ENCODE measurements at regions of chr4 and their contacts with region 1.

Region 1: DNA sequence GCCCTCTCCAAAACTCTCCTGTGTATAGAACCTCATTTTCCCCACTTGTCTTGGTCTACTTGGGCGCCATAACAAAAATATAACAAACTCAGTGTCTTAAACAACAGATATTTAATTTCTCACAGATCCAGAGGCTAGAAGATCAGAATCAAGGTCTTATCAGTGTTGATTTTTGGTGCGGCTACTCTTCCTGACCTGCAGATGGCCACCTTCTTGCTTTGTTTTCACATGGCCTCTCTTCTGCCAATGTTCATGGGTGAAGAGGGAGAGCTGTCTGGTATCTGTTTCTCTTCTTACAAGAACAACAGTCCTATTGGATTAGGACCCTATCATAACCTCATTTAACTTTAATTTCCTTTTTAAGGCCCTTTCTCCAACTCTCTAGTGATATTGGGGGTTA is 177.3 kb downstream of the PABPC4L start:
- DNase-seq: peak; percentile 16
- H3K4me3 ChIP-seq: no peak overlapping the region
- H3K27ac ChIP-seq: no peak overlapping the region
- H3K4me1 ChIP-seq: no peaks in the 10 kb centered on the region
- H3K27me3 ChIP-seq: no peaks in the 10 kb centered on the region
- CTCF ChIP-seq: peak in 1 of 2 donors; percentile 33
- POLR2A ChIP-seq: no peak

Region 2: GRCh38 chr4:133943081-133943480 is 81.2 kb before region 1 on chr4:
- CTCF ChIA-PET with region 1: no interaction called
- POLR2A ChIA-PET with region 1: no interaction called
- dilution Hi-C with region 1: no loop called
- intact Hi-C with region 1: no loop called
- DNase-seq: no peak
- H3K4me3 ChIP-seq: no peak overlapping the region
- H3K27ac ChIP-seq: no peak overlapping the region
- H3K4me1 ChIP-seq: no peaks in the 10 kb centered on the region
- H3K27me3 ChIP-seq: no peaks in the 10 kb centered on the region
- CTCF ChIP-seq: no peak
- POLR2A ChIP-seq: no peak

Region 3: GRCh38 chr4:134045411-134045810 is 21.2 kb after region 1 on chr4:
- CTCF ChIA-PET with region 1: no interaction called
- POLR2A ChIA-PET with region 1: no interaction called
- dilution Hi-C with region 1: no loop called
- intact Hi-C with region 1: no loop called
- DNase-seq: no peak
- H3K4me3 ChIP-seq: no peak overlapping the region
- H3K27ac ChIP-seq: no peak overlapping the region
- H3K4me1 ChIP-seq: no peaks in the 10 kb centered on the region
- H3K27me3 ChIP-seq: no peaks in the 10 kb centered on the region
- CTCF ChIP-seq: no peak
- POLR2A ChIP-seq: no peak

Region 4: GRCh38 chr4:134777606-134778005 is 753.4 kb after region 1 on chr4:
- CTCF ChIA-PET with region 1: interaction called, 19 read pairs
- POLR2A ChIA-PET with region 1: no interaction called
- dilution Hi-C with region 1: no loop called
- intact Hi-C with region 1: loop called (anchors 10 kb)
- DNase-seq: peak; percentile 64
- H3K4me3 ChIP-seq: no peak overlapping the region
- H3K27ac ChIP-seq: no peak overlapping the region
- H3K4me1 ChIP-seq: peaks cover 2% of the 10 kb centered on the region
- H3K27me3 ChIP-seq: no peaks in the 10 kb centered on the region
- CTCF ChIP-seq: peak in 1 of 2 donors; percentile 13
- POLR2A ChIP-seq: no peak

Region 5: GRCh38 chr4:134906404-134907023 is 882.3 kb after region 1 on chr4:
- CTCF ChIA-PET with region 1: interaction called, 7 read pairs
- POLR2A ChIA-PET with region 1: no interaction called
- dilution Hi-C with region 1: no loop called
- intact Hi-C with region 1: loop called (anchors 1 kb)
- DNase-seq: peak; percentile 40
- H3K4me3 ChIP-seq: no peak overlapping the region
- H3K27ac ChIP-seq: no peak overlapping the region
- H3K4me1 ChIP-seq: no peaks in the 10 kb centered on the region
- H3K27me3 ChIP-seq: no peaks in the 10 kb centered on the region
- CTCF ChIP-seq: peak in 1 of 2 donors; percentile 22
- POLR2A ChIP-seq: no peak

Region 6: DNA sequence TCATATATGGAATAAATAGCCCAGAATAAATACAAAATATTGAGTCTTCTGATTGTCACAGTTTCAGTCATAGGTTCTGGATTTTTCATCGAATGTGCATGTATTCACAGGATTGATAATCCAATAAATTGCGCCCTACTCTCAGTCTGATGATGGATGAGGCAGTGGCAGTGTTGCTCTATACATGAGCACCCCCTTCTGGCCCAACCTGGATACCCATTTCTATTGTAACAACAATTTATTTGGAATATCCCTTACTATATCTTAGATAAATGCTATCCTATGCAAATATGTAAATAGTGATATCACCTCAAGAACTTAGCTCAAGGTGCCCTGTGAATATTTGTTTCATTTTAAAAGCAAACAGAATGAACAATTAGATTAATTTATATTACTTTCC is 911.1 kb after region 1 on chr4:
- CTCF ChIA-PET with region 1: no interaction called
- POLR2A ChIA-PET with region 1: no interaction called
- dilution Hi-C with region 1: no loop called
- intact Hi-C with region 1: loop called (anchors 2 kb)
- DNase-seq: peak; percentile 49
- H3K4me3 ChIP-seq: no peak overlapping the region
- H3K27ac ChIP-seq: no peak overlapping the region
- H3K4me1 ChIP-seq: no peaks in the 10 kb centered on the region
- H3K27me3 ChIP-seq: no peaks in the 10 kb centered on the region
- CTCF ChIP-seq: peak in 1 of 2 donors; percentile 47
- POLR2A ChIP-seq: no peak